Right cardiac atrium (tissue), 5 donors: ENCODE measurements at regions of chr1 and their contacts with region 1.

Region 1: DNA sequence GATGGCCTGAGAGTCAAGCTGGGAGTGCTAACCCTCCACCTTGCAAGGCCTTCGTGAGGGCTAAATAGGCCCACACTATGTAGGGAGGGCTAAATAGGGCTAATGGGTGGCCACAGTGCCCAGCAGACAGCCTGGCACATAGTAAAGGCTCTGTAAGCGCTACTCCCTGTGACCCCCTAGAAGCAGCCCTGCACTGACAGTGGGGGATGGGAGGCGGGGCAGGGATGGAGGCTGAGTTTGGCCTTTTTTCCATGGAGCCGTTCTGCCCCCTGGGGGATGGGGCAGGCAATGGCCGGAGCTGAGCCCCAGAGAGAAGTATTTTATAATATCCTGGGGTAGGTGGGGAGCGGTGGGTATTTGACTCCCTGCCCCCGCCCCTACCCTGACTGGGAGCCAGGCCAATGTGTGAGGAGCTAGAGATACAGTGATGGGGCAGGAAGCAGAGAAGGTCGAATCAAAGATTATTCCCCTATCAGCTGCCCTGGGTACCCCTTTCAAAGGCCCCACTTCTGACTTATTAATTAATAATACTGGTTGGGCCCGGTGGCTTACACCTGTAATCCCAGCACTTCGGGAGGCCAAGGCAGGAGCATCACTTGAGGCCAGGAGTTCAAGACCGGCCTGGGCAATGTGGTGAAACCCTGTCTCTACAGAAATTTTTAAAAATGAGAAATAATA is 42.3 kb downstream of the LACTBL1 start:
- DNase-seq: peak; percentile 44 to 81 (median 78)
- ATAC-seq: peak; percentile 73 to 76
- H3K4me3 ChIP-seq: no peak overlapping the region
- H3K27ac ChIP-seq: no peak overlapping the region
- H3K4me1 ChIP-seq: peaks cover 3% of the 10 kb centered on the region
- H3K27me3 ChIP-seq: no peaks in the 10 kb centered on the region

Region 2: GRCh38 chr1:22673486-22674409 is 256.6 kb before region 1 on chr1:
- intact Hi-C with region 1: loop called in 2 of 4 experiments (anchors 2 to 10 kb)
- DNase-seq: peak in 2 of 3 donors; percentile 72 to 84
- ATAC-seq: no peak
- H3K4me3 ChIP-seq: no peak overlapping the region
- H3K27ac ChIP-seq: no peak overlapping the region
- H3K4me1 ChIP-seq: no peaks in the 10 kb centered on the region
- H3K27me3 ChIP-seq: no peaks in the 10 kb centered on the region

Region 3: GRCh38 chr1:22870201-22870871 is 60.0 kb before region 1 on chr1:
- intact Hi-C with region 1: no loop called
- DNase-seq: peak; percentile 45 to 79 (median 74)
- ATAC-seq: peak; percentile 49 to 60
- H3K4me3 ChIP-seq: no peak overlapping the region
- H3K27ac ChIP-seq: no peak overlapping the region
- H3K4me1 ChIP-seq: no peaks in the 10 kb centered on the region
- H3K27me3 ChIP-seq: no peaks in the 10 kb centered on the region

Region 4: DNA sequence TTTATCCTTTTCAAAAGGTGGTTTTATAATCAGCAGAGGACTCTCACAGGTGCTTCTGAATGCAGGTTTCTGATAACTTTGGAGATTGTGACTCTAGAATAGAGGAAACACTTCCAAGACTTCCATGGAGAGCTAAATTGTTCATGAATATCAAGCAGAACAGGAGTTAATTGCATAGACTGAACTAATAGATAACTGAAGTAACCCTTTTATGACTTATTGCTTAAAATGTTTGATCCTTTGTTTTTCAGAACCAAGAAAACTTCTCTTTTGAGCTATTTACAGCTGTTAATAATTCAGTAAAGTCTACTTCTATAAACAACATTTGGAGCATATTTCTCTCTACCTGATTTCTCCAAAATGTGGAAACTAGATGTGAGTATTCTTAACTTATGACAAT is 65.4 kb after region 1 on chr1:
- intact Hi-C with region 1: no loop called
- DNase-seq: no peak
- ATAC-seq: no peak
- H3K4me3 ChIP-seq: no peak overlapping the region
- H3K27ac ChIP-seq: no peak overlapping the region
- H3K4me1 ChIP-seq: no peaks in the 10 kb centered on the region
- H3K27me3 ChIP-seq: no peaks in the 10 kb centered on the region

Region 5: DNA sequence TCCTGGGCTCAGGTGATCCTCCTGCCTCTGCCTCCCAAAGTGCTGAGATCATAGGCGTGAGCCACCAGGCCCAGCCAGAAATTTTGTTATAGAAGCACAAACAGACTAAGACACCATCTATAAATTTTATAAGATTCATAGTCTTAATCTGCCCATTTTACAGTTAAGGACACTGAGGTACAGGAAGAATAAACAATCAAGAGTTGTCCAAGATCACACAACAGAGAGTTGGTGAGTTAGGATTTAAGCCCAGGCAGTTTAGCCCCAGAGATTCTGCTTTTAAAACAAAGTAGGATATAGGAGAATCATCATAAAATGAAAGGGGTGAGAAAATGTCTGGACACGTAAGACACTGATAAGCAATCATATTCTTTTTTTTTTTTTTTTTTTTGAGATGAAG is 78.5 kb after region 1 on chr1:
- intact Hi-C with region 1: no loop called
- DNase-seq: no peak
- ATAC-seq: no peak
- H3K4me3 ChIP-seq: no peak overlapping the region
- H3K27ac ChIP-seq: no peak overlapping the region
- H3K4me1 ChIP-seq: no peaks in the 10 kb centered on the region
- H3K27me3 ChIP-seq: no peaks in the 10 kb centered on the region